A673 (cell line): ENCODE measurements at regions of chr3 and their contacts with region 1.

Region 1: GRCh38 chr3:191051037-191051436 is 148.0 kb upstream of the OSTN start:
- DNase-seq: peak; percentile 82
- H3K4me3 ChIP-seq: no peak overlapping the region
- H3K27ac ChIP-seq: peak overlapping the region; percentile 77
- H3K4me1 ChIP-seq: peaks cover 28% of the 10 kb centered on the region
- H3K27me3 ChIP-seq: no peaks in the 10 kb centered on the region
- CTCF ChIP-seq: peak; percentile 66

Region 2: GRCh38 chr3:189961525-189962161 is 1089.4 kb before region 1 on chr3:
- CTCF ChIA-PET with region 1: interaction called, 3 read pairs
- POLR2A ChIA-PET with region 1: no interaction called
- intact Hi-C with region 1: loop called (anchors 5 kb)
- DNase-seq: peak; percentile 94
- H3K4me3 ChIP-seq: no peak overlapping the region
- H3K27ac ChIP-seq: no peak overlapping the region
- H3K4me1 ChIP-seq: peaks cover 29% of the 10 kb centered on the region
- H3K27me3 ChIP-seq: no peaks in the 10 kb centered on the region
- CTCF ChIP-seq: peak; percentile 93

Region 3: GRCh38 chr3:190718671-190719070 is 332.4 kb before region 1 on chr3:
- CTCF ChIA-PET with region 1: no interaction called
- POLR2A ChIA-PET with region 1: no interaction called
- intact Hi-C with region 1: loop called (anchors 5 kb)
- DNase-seq: no peak
- H3K4me3 ChIP-seq: no peak overlapping the region
- H3K27ac ChIP-seq: no peak overlapping the region
- H3K4me1 ChIP-seq: no peaks in the 10 kb centered on the region
- H3K27me3 ChIP-seq: no peaks in the 10 kb centered on the region
- CTCF ChIP-seq: no peak

Region 4: GRCh38 chr3:190811775-190812480 is 239.1 kb before region 1 on chr3:
- CTCF ChIA-PET with region 1: interaction called, 20 read pairs
- POLR2A ChIA-PET with region 1: no interaction called
- intact Hi-C with region 1: loop called (anchors 2 kb)
- DNase-seq: peak; percentile 91
- H3K4me3 ChIP-seq: peak overlapping the region; percentile 44
- H3K27ac ChIP-seq: peak overlapping the region; percentile 49
- H3K4me1 ChIP-seq: peaks cover 6% of the 10 kb centered on the region
- H3K27me3 ChIP-seq: no peaks in the 10 kb centered on the region
- CTCF ChIP-seq: peak; percentile 82

Region 5: GRCh38 chr3:190883973-190884832 is 166.8 kb before region 1 on chr3:
- CTCF ChIA-PET with region 1: interaction called, 6 read pairs
- POLR2A ChIA-PET with region 1: no interaction called
- intact Hi-C with region 1: loop called (anchors 2 kb)
- DNase-seq: peak; percentile 90
- H3K4me3 ChIP-seq: no peak overlapping the region
- H3K27ac ChIP-seq: no peak overlapping the region
- H3K4me1 ChIP-seq: peaks cover 14% of the 10 kb centered on the region
- H3K27me3 ChIP-seq: no peaks in the 10 kb centered on the region
- CTCF ChIP-seq: peak; percentile 97

Region 6: GRCh38 chr3:191005790-191006189 is 45.2 kb before region 1 on chr3:
- CTCF ChIA-PET with region 1: no interaction called
- POLR2A ChIA-PET with region 1: no interaction called
- intact Hi-C with region 1: loop called (anchors 1 kb)
- DNase-seq: no peak
- H3K4me3 ChIP-seq: no peak overlapping the region
- H3K27ac ChIP-seq: peak overlapping the region; percentile 22
- H3K4me1 ChIP-seq: peaks cover 37% of the 10 kb centered on the region
- H3K27me3 ChIP-seq: no peaks in the 10 kb centered on the region
- CTCF ChIP-seq: no peak

Region 7: GRCh38 chr3:191030929-191031328 is 20.1 kb before region 1 on chr3:
- CTCF ChIA-PET with region 1: no interaction called
- POLR2A ChIA-PET with region 1: interaction called, 12 read pairs
- intact Hi-C with region 1: no loop called
- DNase-seq: no peak
- H3K4me3 ChIP-seq: no peak overlapping the region
- H3K27ac ChIP-seq: no peak overlapping the region
- H3K4me1 ChIP-seq: peaks cover 5% of the 10 kb centered on the region
- H3K27me3 ChIP-seq: no peaks in the 10 kb centered on the region
- CTCF ChIP-seq: no peak